Activated CD8-positive, alpha-beta T cell treated with anti-CD3 and anti-CD28 coated beads, Interleukin-2, amount 10 ng/mL, durations not matched to agents 7 days and 5 days (primary cell): ENCODE measurements at regions of chr6 and their contacts with region 1.

Region 1: GRCh38 chr6:34236131-34236996 is at the start of gene HMGA1:
- DNase-seq: peak; percentile 93
- ATAC-seq: peak; percentile 74
- H3K4me3 Mint-ChIP-seq: peak within 1 kb of the TSS; percentile 88
- H3K27ac Mint-ChIP-seq: peak within 1 kb of the TSS; percentile 95
- H3K4me1 Mint-ChIP-seq: peaks cover 42% of the 10 kb centered on the region
- H3K27me3 Mint-ChIP-seq: no peaks in the 10 kb centered on the region
- total RNA-seq, gene HMGA1: 300 to 308 TPM

Region 2: GRCh38 chr6:34161857-34162515 is 74.4 kb before region 1 on chr6:
- CTCF ChIA-PET with region 1: no interaction called
- POLR2A ChIA-PET with region 1: no interaction called
- DNase-seq: no peak
- ATAC-seq: no peak
- H3K4me3 Mint-ChIP-seq: no peak overlapping the region
- H3K27ac Mint-ChIP-seq: no peak overlapping the region
- H3K4me1 Mint-ChIP-seq: no peaks in the 10 kb centered on the region
- H3K27me3 Mint-ChIP-seq: peaks cover 24% of the 10 kb centered on the region

Region 3: DNA sequence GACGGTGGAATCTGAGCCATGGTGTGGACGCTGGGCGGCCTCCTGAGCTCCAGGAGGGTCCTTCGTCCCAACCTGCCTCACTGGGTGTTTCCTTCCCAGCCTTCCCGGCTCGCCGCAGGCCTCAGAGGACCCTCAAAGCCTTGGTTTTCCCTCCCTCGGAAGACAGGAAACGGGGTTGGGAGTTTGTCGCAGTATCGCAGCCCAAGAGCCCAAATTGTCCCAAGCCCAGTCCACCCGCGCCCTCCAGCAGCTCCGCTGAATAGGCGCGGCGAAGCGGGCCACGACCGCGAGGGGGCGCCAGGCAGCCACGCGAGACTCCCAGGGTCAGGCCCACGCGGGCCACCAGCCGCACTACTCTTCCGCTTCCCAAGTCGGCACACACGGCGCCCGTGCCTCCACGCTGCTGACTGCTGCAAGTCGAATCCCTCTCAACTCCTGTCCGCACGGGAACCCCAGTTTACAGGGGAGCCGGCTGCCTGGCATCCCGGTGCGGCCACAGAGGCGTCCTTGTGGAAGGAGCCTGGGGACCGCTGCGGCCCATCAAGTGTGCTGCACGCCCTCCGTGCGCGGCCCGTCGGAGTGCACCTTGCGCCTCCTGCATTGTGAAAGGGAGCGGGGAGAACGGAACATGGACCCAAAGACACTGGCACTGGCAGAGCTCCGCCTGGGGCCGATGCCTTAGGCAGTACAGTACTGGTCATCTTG is 40.1 kb before region 1 on chr6:
- CTCF ChIA-PET with region 1: interaction called, 5 read pairs
- POLR2A ChIA-PET with region 1: interaction called, 10 read pairs
- DNase-seq: peak; percentile 89
- ATAC-seq: peak; percentile 99
- H3K4me3 Mint-ChIP-seq: peak overlapping the region; percentile 75
- H3K27ac Mint-ChIP-seq: peak overlapping the region; percentile 39
- H3K4me1 Mint-ChIP-seq: peaks cover 7% of the 10 kb centered on the region
- H3K27me3 Mint-ChIP-seq: peaks cover 13% of the 10 kb centered on the region

Region 4: DNA sequence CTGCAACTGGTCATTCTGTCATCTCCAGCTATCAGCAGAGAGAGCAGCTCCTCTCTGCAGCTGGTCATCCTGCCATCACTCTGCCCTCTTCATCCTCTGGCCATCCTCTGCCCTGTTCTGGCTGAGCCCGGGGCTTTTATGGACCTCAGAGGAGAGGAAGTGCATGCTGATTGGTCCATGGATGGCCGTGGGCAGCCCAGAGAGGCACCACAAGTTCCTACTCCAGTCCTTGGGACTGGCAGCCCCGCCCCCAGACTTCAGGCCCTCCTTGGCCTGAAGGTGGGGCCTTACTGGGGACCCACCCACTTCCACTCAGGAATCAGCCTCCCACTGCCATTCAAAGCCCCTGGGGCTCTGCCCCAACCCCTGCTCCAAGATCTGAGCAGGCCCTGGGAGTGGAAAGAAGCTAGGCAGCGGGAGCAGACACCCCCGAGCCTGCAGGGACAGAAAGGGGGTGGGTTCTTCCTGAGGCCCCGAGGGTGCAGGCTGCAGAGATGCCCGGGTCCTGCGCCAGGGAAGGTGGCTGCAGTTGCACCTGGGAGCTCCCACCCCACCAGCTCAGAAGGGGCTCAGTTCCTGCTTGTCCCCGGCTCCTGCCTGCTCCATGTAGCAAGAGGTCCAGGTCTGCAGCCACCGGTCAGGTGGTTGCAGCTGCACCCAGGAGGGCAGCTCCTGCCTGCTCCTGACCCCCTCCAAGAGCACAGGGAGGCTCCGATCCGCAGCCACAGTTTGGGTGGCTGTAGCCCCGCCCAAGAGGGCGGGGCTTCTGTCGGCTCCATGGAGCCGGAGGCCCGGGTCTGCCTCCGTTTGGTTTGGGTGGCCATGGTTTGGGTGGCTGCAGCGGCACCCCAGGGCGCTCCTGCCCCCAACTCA is 33.8 kb before region 1 on chr6:
- CTCF ChIA-PET with region 1: interaction called, 3 read pairs
- POLR2A ChIA-PET with region 1: interaction called, 10 read pairs
- DNase-seq: no peak
- ATAC-seq: no peak
- H3K4me3 Mint-ChIP-seq: no peak overlapping the region
- H3K27ac Mint-ChIP-seq: no peak overlapping the region
- H3K4me1 Mint-ChIP-seq: peaks cover 18% of the 10 kb centered on the region
- H3K27me3 Mint-ChIP-seq: peaks cover 7% of the 10 kb centered on the region

Region 5: GRCh38 chr6:34223956-34224940 is 12.1 kb before region 1 on chr6:
- CTCF ChIA-PET with region 1: interaction called, 4 read pairs
- POLR2A ChIA-PET with region 1: interaction called, 42 read pairs
- DNase-seq: peak; percentile 94
- ATAC-seq: peak; percentile 98
- H3K4me3 Mint-ChIP-seq: peak overlapping the region; percentile 62
- H3K27ac Mint-ChIP-seq: peak overlapping the region; percentile 81
- H3K4me1 Mint-ChIP-seq: peaks cover 36% of the 10 kb centered on the region
- H3K27me3 Mint-ChIP-seq: peaks cover 3% of the 10 kb centered on the region